Activated CD8-positive, alpha-beta T cell treated with anti-CD3 and anti-CD28 coated beads for 36 hours (primary cell): ENCODE measurements at regions of chr2 and their contacts with region 1.

Region 1: DNA sequence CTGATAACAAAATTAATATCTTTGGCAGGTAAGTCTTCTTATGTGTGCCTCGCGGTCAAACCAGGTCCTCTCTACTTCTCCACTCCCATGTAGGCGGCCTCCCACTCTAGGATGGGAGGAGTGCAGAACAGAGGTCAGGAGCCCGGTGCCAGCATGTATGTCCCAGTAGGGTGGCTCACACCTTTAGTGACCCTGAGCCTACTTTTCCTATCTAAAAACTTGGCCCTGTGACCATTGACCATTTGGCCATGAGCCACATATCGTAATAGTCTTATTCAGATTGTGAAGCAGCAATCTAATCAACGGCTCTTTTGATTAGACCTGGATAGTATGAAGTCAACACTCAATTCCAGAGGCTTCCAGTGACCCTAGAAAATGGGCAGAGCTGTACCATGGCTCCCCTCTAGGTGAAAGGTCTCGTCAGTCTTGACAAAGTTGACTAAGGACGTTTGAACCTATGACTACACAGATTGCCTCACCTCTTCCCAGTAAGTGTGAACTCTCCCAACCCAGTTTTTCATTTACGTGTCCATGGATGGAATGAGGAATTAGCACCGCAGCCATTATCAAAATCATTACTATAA is 17.1 kb upstream of the FABP1 start:
- DNase-seq: no peak
- ATAC-seq: no peak
- H3K4me3 Mint-ChIP-seq: no peak overlapping the region
- H3K27ac Mint-ChIP-seq: no peak overlapping the region
- H3K4me1 Mint-ChIP-seq: no peaks in the 10 kb centered on the region
- H3K27me3 Mint-ChIP-seq: peaks cover 21% of the 10 kb centered on the region
- CTCF ChIP-seq: no peak

Region 2: GRCh38 chr2:88099798-88100488 is 45.1 kb before region 1 on chr2:
- CTCF ChIA-PET with region 1: no interaction called
- POLR2A ChIA-PET with region 1: no interaction called
- intact Hi-C with region 1: no loop called
- DNase-seq: peak; percentile 6
- ATAC-seq: no peak
- H3K4me3 Mint-ChIP-seq: no peak overlapping the region
- H3K27ac Mint-ChIP-seq: no peak overlapping the region
- H3K4me1 Mint-ChIP-seq: no peaks in the 10 kb centered on the region
- H3K27me3 Mint-ChIP-seq: peaks cover 1% of the 10 kb centered on the region
- CTCF ChIP-seq: no peak

Region 3: GRCh38 chr2:88110830-88111229 is 34.2 kb before region 1 on chr2:
- CTCF ChIA-PET with region 1: no interaction called
- POLR2A ChIA-PET with region 1: no interaction called
- intact Hi-C with region 1: no loop called
- DNase-seq: no peak
- ATAC-seq: no peak
- H3K4me3 Mint-ChIP-seq: no peak overlapping the region
- H3K27ac Mint-ChIP-seq: no peak overlapping the region
- H3K4me1 Mint-ChIP-seq: no peaks in the 10 kb centered on the region
- H3K27me3 Mint-ChIP-seq: no peaks in the 10 kb centered on the region
- CTCF ChIP-seq: no peak

Region 4: DNA sequence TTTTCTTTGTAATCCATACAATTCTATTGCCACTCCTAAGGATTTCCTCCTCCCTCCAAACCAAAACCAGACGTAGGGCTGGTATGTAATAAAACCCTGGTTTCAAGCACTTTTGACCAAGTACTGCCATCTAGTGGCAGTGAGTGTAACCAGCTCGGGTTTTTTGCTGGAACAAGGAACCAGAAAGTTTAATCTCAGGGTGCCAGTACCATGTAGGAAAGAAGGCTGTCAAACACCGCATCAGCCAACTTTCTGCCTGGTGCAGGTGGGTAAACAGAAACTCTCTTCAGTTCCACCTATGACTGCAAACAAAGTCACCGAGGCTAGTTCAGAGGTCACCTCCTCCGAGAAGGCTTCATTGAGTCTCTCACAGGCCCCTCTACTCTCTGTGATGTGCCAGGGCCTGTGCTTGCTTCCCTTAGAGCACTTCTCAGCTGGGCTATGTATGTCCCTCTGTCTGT is 15.0 kb after region 1 on chr2:
- CTCF ChIA-PET with region 1: interaction called, 15 read pairs
- POLR2A ChIA-PET with region 1: no interaction called
- intact Hi-C with region 1: no loop called
- DNase-seq: peak; percentile 62
- ATAC-seq: peak; percentile 74
- H3K4me3 Mint-ChIP-seq: no peak overlapping the region
- H3K27ac Mint-ChIP-seq: no peak overlapping the region
- H3K4me1 Mint-ChIP-seq: no peaks in the 10 kb centered on the region
- H3K27me3 Mint-ChIP-seq: no peaks in the 10 kb centered on the region
- CTCF ChIP-seq: peak; percentile 77